ENCODE measurements at regions of chr9 and their contacts with region 1.

Region 1: GRCh38 chr9:5389109-5389732 is 48.5 kb downstream of the PLGRKT start:
- DNase-seq: no peak
- H3K4me3 ChIP-seq: no peak overlapping the region
- H3K27ac ChIP-seq: no peak overlapping the region
- H3K4me1 ChIP-seq: peaks cover 11% of the 10 kb centered on the region
- H3K27me3 ChIP-seq: no peaks in the 10 kb centered on the region
- CTCF ChIP-seq: no peak
- POLR2A ChIP-seq: no peak

Region 2: DNA sequence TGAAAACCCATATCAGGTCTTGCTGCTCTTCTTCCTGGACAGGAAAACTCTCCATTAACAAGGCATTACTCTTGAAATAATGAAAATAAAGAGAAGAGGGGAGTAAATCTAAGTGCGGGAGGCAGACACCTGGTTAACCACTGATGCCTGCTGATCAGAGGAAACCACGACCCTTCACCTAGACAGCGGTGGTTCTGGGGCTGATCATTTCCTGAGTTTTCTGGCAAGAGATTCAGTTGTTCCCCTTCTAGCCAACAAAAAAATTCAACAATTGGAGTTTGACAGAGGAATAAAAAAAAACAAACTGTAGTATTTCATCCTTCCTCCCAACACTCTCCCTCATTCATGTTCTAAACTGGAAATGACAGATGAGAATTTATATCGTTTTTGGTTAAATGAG is 87.7 kb before region 1 on chr9:
- intact Hi-C with region 1: loop called (anchors 10 kb)
- DNase-seq: no peak
- H3K4me3 ChIP-seq: no peak overlapping the region
- H3K27ac ChIP-seq: no peak overlapping the region
- H3K4me1 ChIP-seq: no peaks in the 10 kb centered on the region
- H3K27me3 ChIP-seq: no peaks in the 10 kb centered on the region
- CTCF ChIP-seq: no peak
- POLR2A ChIP-seq: no peak